Head of caudate nucleus (tissue), 42 donors: ENCODE measurements at regions of chr7 and their contacts with region 1.

Region 1: GRCh38 chr7:80428161-80429054 is 83.5 kb downstream of the GNAT3 start:
- DNase-seq: peak in 6 of 42 donors; percentile 3 to 45 (median 22)

Region 2: GRCh38 chr7:80659120-80660055 is 231.0 kb after region 1 on chr7:
- intact Hi-C with region 1: loop called (anchors 5 kb)
- DNase-seq: no peak

Region 3: GRCh38 chr7:81094952-81095351 is 666.5 kb after region 1 on chr7:
- intact Hi-C with region 1: no loop called
- DNase-seq: no peak